ENCODE measurements at regions of chr1 and their contacts with region 1.

Region 1: GRCh38 chr1:207848234-207848633 is 62.7 kb downstream of the CD34 start:
- DNase-seq: peak; percentile 79
- ATAC-seq: peak; percentile 93
- H3K4me3 Mint-ChIP-seq: peak overlapping the region; percentile 16
- H3K27ac Mint-ChIP-seq: peak overlapping the region; percentile 73
- H3K4me1 Mint-ChIP-seq: peaks cover 67% of the 10 kb centered on the region
- H3K27me3 Mint-ChIP-seq: no peaks in the 10 kb centered on the region
- CTCF ChIP-seq: no peak

Region 2: GRCh38 chr1:207519505-207520404 is 328.5 kb before region 1 on chr1:
- CTCF ChIA-PET with region 1: no interaction called
- POLR2A ChIA-PET with region 1: no interaction called
- intact Hi-C with region 1: no loop called
- DNase-seq: no peak
- ATAC-seq: no peak
- H3K4me3 Mint-ChIP-seq: no peak overlapping the region
- H3K27ac Mint-ChIP-seq: no peak overlapping the region
- H3K4me1 Mint-ChIP-seq: no peaks in the 10 kb centered on the region
- H3K27me3 Mint-ChIP-seq: no peaks in the 10 kb centered on the region
- CTCF ChIP-seq: no peak

Region 3: DNA sequence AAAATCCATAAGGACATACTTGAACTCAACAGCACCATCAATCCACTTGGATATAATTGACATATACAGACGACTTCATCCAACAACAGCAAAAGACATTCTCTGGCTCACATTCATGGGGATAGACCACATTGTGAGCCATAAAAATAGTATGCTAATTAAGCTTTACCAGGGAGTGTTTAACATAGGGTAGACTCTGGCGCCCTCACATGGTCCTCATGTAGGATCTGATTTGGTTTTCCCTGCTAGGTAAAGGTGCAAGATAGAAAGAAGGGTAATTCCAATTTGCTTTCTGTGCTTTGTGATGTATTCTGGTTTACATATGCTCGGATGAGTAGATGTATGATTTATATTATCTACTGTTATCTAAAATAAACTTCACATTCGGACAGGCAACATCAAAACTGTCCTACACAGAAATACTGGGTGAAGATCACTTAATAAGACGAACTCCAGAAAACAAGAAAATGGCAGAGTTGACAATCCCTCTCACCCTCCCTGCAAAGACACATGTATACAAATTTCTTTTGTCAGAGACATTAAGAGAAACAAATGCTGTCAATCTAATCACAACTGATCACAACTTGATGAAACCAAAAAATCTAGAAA is 175.6 kb before region 1 on chr1:
- CTCF ChIA-PET with region 1: no interaction called
- POLR2A ChIA-PET with region 1: no interaction called
- intact Hi-C with region 1: no loop called
- DNase-seq: peak; percentile 64
- ATAC-seq: peak; percentile 58
- H3K4me3 Mint-ChIP-seq: no peak overlapping the region
- H3K27ac Mint-ChIP-seq: no peak overlapping the region
- H3K4me1 Mint-ChIP-seq: peaks cover 3% of the 10 kb centered on the region
- H3K27me3 Mint-ChIP-seq: peaks cover 50% of the 10 kb centered on the region
- CTCF ChIP-seq: peak; percentile 65

Region 4: GRCh38 chr1:207740224-207740623 is 108.0 kb before region 1 on chr1:
- CTCF ChIA-PET with region 1: no interaction called
- POLR2A ChIA-PET with region 1: no interaction called
- intact Hi-C with region 1: no loop called
- DNase-seq: no peak
- ATAC-seq: no peak
- H3K4me3 Mint-ChIP-seq: no peak overlapping the region
- H3K27ac Mint-ChIP-seq: no peak overlapping the region
- H3K4me1 Mint-ChIP-seq: peaks cover 8% of the 10 kb centered on the region
- H3K27me3 Mint-ChIP-seq: no peaks in the 10 kb centered on the region
- CTCF ChIP-seq: no peak

Region 5: DNA sequence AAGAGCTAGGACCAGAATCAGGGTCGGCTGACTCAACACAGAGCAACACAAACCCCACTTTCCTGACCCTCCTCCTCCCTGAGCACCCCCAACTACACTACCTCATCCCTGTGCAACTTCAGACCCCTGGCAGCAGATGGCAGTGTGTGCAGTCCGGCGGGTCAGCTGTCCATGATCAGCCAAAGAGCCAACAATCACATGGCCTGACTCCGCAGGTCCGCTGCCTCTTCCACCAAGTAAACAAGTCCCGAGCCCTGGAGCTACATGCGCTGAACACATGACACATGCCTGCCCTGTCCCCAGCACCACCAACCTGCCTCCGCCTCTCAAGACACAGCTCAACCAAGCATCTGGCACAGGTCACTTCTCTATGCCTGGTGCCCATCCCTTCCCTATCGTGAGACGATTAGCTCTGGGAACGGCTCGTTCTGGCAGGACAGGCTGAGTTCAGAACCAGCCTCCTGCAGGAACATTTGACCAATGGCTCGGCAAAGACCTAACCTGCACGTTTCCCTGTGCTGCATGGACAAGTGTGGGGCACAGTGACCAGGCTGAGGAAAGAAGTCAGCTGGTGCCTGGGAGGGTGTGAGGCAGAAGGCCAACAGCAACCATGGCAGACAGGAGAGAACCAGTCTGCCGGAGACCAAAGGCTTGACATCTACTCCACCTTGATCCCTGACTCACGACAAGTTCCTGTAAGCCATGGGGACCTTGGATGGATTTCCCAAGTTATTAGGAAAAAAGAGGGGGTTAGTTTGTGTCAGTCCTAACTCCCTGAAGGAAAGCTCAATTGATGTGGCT is 36.1 kb before region 1 on chr1:
- CTCF ChIA-PET with region 1: no interaction called
- POLR2A ChIA-PET with region 1: no interaction called
- intact Hi-C with region 1: no loop called
- DNase-seq: no peak
- ATAC-seq: peak; percentile 57
- H3K4me3 Mint-ChIP-seq: no peak overlapping the region
- H3K27ac Mint-ChIP-seq: peak overlapping the region; percentile 67
- H3K4me1 Mint-ChIP-seq: peaks cover 60% of the 10 kb centered on the region
- H3K27me3 Mint-ChIP-seq: no peaks in the 10 kb centered on the region
- CTCF ChIP-seq: no peak

Region 6: GRCh38 chr1:207863893-207864535 is 15.8 kb after region 1 on chr1:
- CTCF ChIA-PET with region 1: interaction called, 22 read pairs
- POLR2A ChIA-PET with region 1: interaction called, 42 read pairs
- intact Hi-C with region 1: no loop called
- DNase-seq: peak; percentile 70
- ATAC-seq: peak; percentile 57
- H3K4me3 Mint-ChIP-seq: peak overlapping the region; percentile 50
- H3K27ac Mint-ChIP-seq: peak overlapping the region; percentile 87
- H3K4me1 Mint-ChIP-seq: peaks cover 65% of the 10 kb centered on the region
- H3K27me3 Mint-ChIP-seq: no peaks in the 10 kb centered on the region
- CTCF ChIP-seq: peak; percentile 14

Measured in activated CD8-positive, alpha-beta T cell treated with anti-CD3 and anti-CD28 coated beads for 36 hours (primary cell).